Activated CD4-positive, alpha-beta T cell treated with anti-CD3 and anti-CD28 coated beads, Interleukin-2, amount 10 ng/mL, durations not matched to agents 24 days and 14 days (primary cell): ENCODE measurements at regions of chr3 and their contacts with region 1.

Region 1: DNA sequence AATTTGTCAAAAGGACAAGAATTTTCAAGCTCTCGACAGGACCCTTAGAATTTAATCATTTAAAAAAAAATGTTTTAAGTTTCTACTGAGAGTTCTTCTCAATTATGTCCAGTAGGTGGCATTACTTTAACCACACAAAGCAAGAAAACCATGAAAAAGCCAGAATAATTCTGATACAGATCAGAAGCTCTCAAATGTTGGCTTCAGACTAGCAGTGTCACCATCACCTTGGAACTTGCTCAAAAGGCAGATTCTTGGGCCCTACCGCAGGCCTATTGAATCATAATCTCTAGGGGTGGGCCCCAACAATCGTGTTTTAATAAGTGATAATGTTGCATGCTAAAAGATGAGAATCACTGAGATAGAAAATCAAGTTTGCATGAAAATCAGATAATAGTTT is 99.5 kb upstream of the KCNMB2 start:
- DNase-seq: no peak
- H3K4me3 Mint-ChIP-seq: no peak overlapping the region
- H3K27ac Mint-ChIP-seq: no peak overlapping the region
- H3K4me1 Mint-ChIP-seq: no peaks in the 10 kb centered on the region
- H3K27me3 Mint-ChIP-seq: no peaks in the 10 kb centered on the region

Region 2: GRCh38 chr3:178325330-178325729 is 111.4 kb before region 1 on chr3:
- intact Hi-C with region 1: no loop called
- DNase-seq: no peak
- H3K4me3 Mint-ChIP-seq: no peak overlapping the region
- H3K27ac Mint-ChIP-seq: no peak overlapping the region
- H3K4me1 Mint-ChIP-seq: no peaks in the 10 kb centered on the region
- H3K27me3 Mint-ChIP-seq: no peaks in the 10 kb centered on the region

Region 3: DNA sequence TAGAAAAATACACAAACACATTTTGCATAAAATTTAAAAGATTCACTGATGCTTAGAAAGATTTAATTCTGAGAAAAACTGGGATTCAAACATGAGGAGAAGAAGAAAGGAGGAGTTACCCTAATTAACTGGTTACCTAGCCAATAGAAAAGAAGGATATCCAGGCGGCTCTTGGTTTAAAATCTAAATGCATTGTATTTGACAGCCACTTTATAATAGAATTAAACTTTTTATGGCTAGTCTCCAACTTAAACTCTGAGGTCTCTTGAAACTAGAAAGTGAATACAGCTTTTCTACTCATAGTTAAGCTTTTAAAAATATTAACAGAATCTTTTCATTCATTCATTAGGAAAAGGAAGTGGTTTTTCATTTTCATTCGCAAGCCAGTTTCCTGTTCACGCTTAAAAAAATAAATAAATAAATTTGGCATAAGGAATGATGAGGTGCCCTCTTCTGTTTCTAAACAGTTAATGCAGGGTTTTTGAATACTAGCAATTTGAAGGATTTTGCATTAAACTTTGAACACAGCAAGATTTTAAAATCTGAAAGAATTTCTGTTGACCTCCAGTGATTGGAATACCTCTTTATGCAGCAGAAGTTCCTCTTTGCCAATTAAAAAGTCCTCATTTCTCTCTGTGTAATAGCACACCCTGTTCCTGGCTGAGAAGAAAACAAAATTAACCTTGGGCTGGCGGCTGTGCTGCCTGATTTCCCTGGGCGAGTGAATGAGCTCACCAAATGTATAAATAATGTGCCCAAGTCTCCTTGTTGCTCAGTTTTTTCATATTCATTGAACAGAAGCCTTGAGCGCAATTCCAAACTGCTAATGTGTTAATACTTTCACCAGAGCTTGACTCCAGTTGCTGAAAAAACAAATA is 529.8 kb after region 1 on chr3:
- intact Hi-C with region 1: loop called (anchors 5 kb)
- DNase-seq: no peak
- H3K4me3 Mint-ChIP-seq: no peak overlapping the region
- H3K27ac Mint-ChIP-seq: no peak overlapping the region
- H3K4me1 Mint-ChIP-seq: peaks cover 10% of the 10 kb centered on the region
- H3K27me3 Mint-ChIP-seq: no peaks in the 10 kb centered on the region